MCF 10A (cell line): ENCODE measurements at regions of chr2 and their contacts with region 1.

Region 1: DNA sequence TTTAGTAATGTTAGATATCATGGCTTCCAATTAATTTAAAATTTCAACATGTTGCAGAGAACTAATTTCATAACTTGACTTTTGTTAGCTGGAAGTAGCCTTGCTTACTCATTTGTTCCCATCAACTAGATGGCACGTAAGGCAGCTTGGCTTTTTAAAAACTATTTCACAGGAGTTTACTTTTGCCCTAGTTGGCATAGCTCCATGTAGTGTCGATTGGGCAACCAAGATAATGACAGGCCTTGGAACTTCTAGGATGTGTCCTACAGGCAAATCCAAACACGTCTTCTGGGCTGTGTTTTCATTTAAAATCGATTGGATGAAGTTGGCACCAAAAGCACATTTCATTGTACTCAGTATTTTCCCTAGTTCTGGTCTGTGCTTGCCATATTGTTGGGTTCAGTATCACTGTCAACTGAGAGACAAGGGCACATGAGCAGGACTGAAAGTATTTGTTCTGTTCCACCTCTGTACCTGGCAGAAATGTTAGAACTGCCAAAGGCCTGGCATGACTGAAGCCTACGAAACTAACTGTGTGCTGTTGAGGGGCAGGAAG is 29.4 kb downstream of the HADHB start:
- DNase-seq: peak; percentile 100
- H3K4me3 Mint-ChIP-seq: peak overlapping the region; percentile 31
- H3K27ac Mint-ChIP-seq: peak overlapping the region; percentile 92
- H3K4me1 Mint-ChIP-seq: peaks cover 35% of the 10 kb centered on the region
- H3K27me3 Mint-ChIP-seq: no peaks in the 10 kb centered on the region
- CTCF ChIP-seq: no peak

Region 2: GRCh38 chr2:26235085-26235484 is 39.1 kb before region 1 on chr2:
- CTCF ChIA-PET with region 1: no interaction called
- POLR2A ChIA-PET with region 1: interaction called, 19 read pairs
- intact Hi-C with region 1: no loop called
- DNase-seq: peak; percentile 15
- H3K4me3 Mint-ChIP-seq: no peak overlapping the region
- H3K27ac Mint-ChIP-seq: no peak overlapping the region
- H3K4me1 Mint-ChIP-seq: peaks cover 17% of the 10 kb centered on the region
- H3K27me3 Mint-ChIP-seq: no peaks in the 10 kb centered on the region
- CTCF ChIP-seq: peak; percentile 30

Region 3: DNA sequence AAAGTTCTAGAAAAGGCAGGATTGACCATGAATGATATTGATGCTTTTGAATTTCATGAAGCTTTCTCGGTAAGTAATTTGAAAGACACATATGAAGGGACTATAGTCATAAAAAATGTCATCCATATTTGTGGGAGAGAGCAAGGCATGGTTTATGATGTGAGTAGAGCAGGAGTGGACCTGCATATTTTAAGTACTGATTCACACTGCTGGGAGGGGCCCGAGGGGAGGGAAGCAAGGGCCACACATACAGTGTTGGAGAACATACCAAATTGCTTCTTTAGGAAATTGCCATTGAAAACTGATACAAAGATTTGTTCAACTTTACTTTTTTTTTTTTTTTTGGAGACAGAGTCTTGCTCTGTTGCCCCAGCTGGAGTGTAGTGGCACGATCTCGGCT is 10.0 kb after region 1 on chr2:
- CTCF ChIA-PET with region 1: interaction called, 5 read pairs
- POLR2A ChIA-PET with region 1: interaction called, 58 read pairs
- intact Hi-C with region 1: no loop called
- DNase-seq: peak; percentile 64
- H3K4me3 Mint-ChIP-seq: peak overlapping the region; percentile 22
- H3K27ac Mint-ChIP-seq: peak overlapping the region; percentile 47
- H3K4me1 Mint-ChIP-seq: peaks cover 20% of the 10 kb centered on the region
- H3K27me3 Mint-ChIP-seq: no peaks in the 10 kb centered on the region
- CTCF ChIP-seq: no peak

Region 4: DNA sequence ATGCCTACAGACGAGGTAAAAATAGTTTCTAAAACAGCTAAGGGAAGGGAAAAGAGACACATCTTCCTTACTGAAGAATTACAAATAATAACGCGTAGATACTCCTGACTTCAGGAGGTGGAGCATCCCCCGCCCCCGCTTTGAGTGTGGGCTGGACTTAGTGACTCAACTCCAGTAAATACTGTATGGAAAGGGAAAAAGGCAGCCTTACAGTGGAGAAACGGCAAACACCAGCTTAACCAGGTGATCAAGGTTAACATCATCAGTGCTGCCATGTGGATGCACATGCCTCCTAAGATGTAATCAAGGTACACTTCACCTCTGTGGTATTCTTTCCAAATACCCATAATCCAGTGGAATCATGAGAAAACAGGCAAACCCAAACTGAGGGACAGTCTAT is 18.5 kb after region 1 on chr2:
- CTCF ChIA-PET with region 1: no interaction called
- POLR2A ChIA-PET with region 1: interaction called, 77 read pairs
- intact Hi-C with region 1: no loop called
- DNase-seq: peak; percentile 80
- H3K4me3 Mint-ChIP-seq: no peak overlapping the region
- H3K27ac Mint-ChIP-seq: no peak overlapping the region
- H3K4me1 Mint-ChIP-seq: peaks cover 7% of the 10 kb centered on the region
- H3K27me3 Mint-ChIP-seq: no peaks in the 10 kb centered on the region
- CTCF ChIP-seq: no peak

Region 5: GRCh38 chr2:26299471-26300101 is 25.4 kb after region 1 on chr2:
- CTCF ChIA-PET with region 1: interaction called, 4 read pairs
- POLR2A ChIA-PET with region 1: interaction called, 77 read pairs
- intact Hi-C with region 1: no loop called
- DNase-seq: peak; percentile 52
- H3K4me3 Mint-ChIP-seq: no peak overlapping the region
- H3K27ac Mint-ChIP-seq: no peak overlapping the region
- H3K4me1 Mint-ChIP-seq: peaks cover 13% of the 10 kb centered on the region
- H3K27me3 Mint-ChIP-seq: no peaks in the 10 kb centered on the region
- CTCF ChIP-seq: no peak

Region 6: GRCh38 chr2:26305495-26305894 is 31.4 kb after region 1 on chr2:
- CTCF ChIA-PET with region 1: interaction called, 4 read pairs
- POLR2A ChIA-PET with region 1: interaction called, 77 read pairs
- intact Hi-C with region 1: no loop called
- DNase-seq: no peak
- H3K4me3 Mint-ChIP-seq: no peak overlapping the region
- H3K27ac Mint-ChIP-seq: no peak overlapping the region
- H3K4me1 Mint-ChIP-seq: peaks cover 13% of the 10 kb centered on the region
- H3K27me3 Mint-ChIP-seq: no peaks in the 10 kb centered on the region
- CTCF ChIP-seq: no peak

Region 7: DNA sequence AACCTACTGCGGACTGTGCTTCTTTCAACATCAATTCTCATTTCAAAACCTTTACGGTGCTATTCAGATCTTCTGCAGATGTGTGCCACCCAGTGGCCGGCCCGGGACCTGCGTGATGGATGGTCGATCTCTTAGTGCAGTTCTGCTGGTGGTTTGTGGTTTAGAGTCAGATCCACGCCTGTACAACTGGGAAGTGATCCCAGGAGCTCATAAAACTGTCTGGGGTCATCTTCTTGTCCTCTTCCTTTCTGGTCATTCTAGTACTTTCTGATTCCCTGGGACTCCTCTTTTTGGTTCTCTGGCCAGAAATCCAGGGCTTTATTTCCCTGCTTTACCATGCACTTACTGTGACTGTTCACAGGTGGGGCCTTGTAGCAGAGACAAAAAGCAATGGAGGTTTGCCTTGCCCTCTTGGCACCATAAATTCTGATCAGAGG is 56.0 kb after region 1 on chr2:
- CTCF ChIA-PET with region 1: interaction called, 5 read pairs
- POLR2A ChIA-PET with region 1: interaction called, 17 read pairs
- intact Hi-C with region 1: no loop called
- DNase-seq: peak; percentile 81
- H3K4me3 Mint-ChIP-seq: no peak overlapping the region
- H3K27ac Mint-ChIP-seq: no peak overlapping the region
- H3K4me1 Mint-ChIP-seq: peaks cover 14% of the 10 kb centered on the region
- H3K27me3 Mint-ChIP-seq: peaks cover 9% of the 10 kb centered on the region
- CTCF ChIP-seq: peak; percentile 82